Activated naive CD4-positive, alpha-beta T cell treated with anti-CD3 and anti-CD28 coated beads for 36 hours (primary cell): ENCODE measurements at regions of chr16 and their contacts with region 1.

Region 1: GRCh38 chr16:29848420-29849297 is 14.4 kb downstream of the CDIPT start:
- DNase-seq: peak; percentile 91
- H3K4me3 Mint-ChIP-seq: no peak overlapping the region
- H3K27ac Mint-ChIP-seq: no peak overlapping the region
- H3K4me1 Mint-ChIP-seq: peaks cover 5% of the 10 kb centered on the region
- H3K27me3 Mint-ChIP-seq: no peaks in the 10 kb centered on the region

Region 2: GRCh38 chr16:29694384-29695195 is 154.1 kb before region 1 on chr16:
- CTCF ChIA-PET with region 1: interaction called, 72 read pairs
- intact Hi-C with region 1: no loop called
- DNase-seq: no peak
- H3K4me3 Mint-ChIP-seq: no peak overlapping the region
- H3K27ac Mint-ChIP-seq: no peak overlapping the region
- H3K4me1 Mint-ChIP-seq: peaks cover 5% of the 10 kb centered on the region
- H3K27me3 Mint-ChIP-seq: no peaks in the 10 kb centered on the region

Region 3: DNA sequence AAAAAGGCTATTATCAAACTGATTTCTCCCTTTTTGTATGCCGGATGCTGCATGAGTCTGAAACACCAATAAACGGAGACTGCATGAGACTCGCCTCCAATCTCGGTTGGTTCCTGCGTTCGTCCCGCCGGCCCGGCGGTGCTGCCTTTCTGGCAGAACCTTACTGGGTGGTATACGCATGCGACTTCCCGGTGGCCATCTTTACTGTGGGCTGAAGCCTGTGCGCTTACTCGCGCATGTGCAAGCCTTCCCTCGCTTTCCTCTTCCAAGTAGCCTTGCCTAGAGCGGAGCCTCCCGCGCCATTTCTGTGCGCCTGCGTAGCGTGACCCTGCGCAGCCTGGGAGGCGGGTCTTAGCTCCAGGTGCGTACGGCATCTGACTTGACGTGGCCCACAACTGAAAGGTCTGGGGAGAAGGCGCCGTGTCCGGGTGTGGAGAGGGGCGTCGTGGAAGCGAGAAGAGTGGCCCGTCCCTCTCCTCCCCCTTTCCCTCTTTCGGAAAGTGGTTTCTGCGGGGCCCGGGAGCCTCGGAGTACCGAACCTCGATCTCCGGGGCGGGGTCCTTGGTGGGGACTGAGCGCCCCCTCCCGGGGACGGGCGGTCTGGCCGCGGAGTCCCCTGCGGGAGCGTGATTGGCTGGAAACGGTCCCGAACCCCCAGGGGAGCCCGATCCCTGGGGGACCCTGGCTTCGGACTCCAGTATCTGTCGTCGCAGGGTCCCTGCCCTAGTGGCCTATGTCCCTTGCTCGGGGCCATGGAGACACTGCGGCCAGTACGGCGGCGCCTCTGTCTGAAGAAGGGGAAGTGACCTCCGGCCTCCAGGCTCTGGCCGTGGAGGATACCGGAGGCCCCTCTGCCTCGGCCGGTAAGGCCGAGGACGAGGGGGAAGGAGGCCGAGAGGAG is 32.6 kb before region 1 on chr16 and contains the start of gene PAGR1:
- CTCF ChIA-PET with region 1: interaction called, 92 read pairs
- intact Hi-C with region 1: loop called (anchors 1 kb)
- DNase-seq: peak; percentile 99
- H3K4me3 Mint-ChIP-seq: peak within 1 kb of the TSS; percentile 93
- H3K27ac Mint-ChIP-seq: peak within 1 kb of the TSS; percentile 96
- H3K4me1 Mint-ChIP-seq: peaks cover 55% of the 10 kb centered on the region
- H3K27me3 Mint-ChIP-seq: no peaks in the 10 kb centered on the region
- total RNA-seq, gene PAGR1: 16.9 to 19.3 TPM

Region 4: DNA sequence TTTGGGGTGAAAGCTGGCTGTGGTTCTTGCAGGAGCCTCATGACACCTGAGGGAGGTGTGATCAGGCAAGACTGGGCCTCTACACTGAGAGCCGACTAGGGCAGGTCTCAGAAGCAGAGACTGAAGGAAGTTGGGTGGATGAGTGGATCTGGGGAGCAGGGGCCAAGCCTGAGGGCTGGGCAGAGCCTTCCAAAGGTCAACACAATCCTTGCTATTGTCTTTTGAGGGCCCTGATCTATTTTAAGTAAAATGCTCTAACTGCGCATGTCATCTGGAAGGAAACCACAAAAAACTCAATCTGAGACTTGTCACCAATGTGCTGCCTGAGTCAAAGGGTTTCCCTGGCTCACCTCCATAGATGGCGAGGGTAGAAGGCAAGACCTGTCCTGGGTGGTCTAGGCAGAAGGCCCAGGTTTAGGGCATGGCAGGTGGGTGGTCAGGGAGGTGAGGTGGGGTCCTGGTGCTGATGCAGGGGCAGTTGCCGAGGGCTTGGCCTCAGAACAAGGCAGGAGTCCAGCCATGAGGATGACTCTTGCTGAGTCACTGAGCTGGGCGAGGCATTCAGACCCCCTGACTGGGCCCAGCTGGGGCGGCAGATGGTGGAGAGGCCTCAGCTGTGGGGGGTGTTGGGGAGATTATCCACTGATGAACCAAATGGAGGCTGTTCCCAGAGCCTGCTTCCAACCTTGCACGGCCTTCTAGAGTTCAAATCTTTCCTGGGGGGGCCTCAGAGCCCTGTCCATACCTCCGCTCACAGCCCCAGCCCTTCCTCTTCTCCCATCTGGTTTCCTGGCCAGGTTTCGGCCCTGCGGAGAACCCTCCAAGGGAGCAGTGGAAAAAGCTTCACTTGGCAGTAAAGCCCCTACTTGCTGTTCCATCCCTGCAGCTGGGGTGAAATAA is 23.3 kb before region 1 on chr16:
- CTCF ChIA-PET with region 1: interaction called, 92 read pairs
- intact Hi-C with region 1: loop called (anchors 1 kb)
- DNase-seq: peak; percentile 78
- H3K4me3 Mint-ChIP-seq: peak overlapping the region; percentile 55
- H3K27ac Mint-ChIP-seq: peak overlapping the region; percentile 90
- H3K4me1 Mint-ChIP-seq: peaks cover 81% of the 10 kb centered on the region
- H3K27me3 Mint-ChIP-seq: no peaks in the 10 kb centered on the region